Breast epithelium (tissue), 4 donors: ENCODE measurements at regions of chr18 and their contacts with region 1.

Region 1: GRCh38 chr18:48475635-48476549 is 62.9 kb upstream of the CTIF start:
- DNase-seq: no peak
- H3K4me3 ChIP-seq: no peak overlapping the region
- H3K27ac ChIP-seq: no peak overlapping the region
- H3K4me1 ChIP-seq: peaks cover 0 to 5% of the 10 kb centered on the region in 2 donors
- H3K27me3 ChIP-seq: no peaks in the 10 kb centered on the region
- CTCF ChIP-seq: peak; percentile 54 to 85 (median 77)
- POLR2A ChIP-seq: no peak

Region 2: DNA sequence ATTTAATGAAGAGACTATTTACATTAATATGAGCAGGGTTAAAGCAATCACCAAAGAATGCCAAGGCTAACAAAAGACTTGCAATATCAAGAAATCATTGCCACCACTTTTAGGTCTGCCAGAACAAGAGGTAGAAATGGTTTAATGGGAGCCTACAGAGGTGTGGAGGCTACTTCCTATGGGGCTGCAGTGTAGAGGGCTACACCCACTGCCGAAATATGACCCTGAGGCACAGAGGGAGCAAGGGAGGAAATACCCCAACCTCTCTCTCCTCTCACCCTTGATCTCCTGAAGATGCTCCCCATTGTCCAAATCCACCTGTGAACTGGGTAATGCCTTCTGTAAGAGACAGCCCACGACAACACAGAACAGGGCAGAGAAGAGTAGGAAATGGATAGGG is 860.8 kb before region 1 on chr18:
- intact Hi-C with region 1: no loop called
- DNase-seq: no peak
- H3K4me3 ChIP-seq: no peak overlapping the region
- H3K27ac ChIP-seq: no peak overlapping the region
- H3K4me1 ChIP-seq: no peaks in the 10 kb centered on the region
- H3K27me3 ChIP-seq: no peaks in the 10 kb centered on the region
- CTCF ChIP-seq: no peak
- POLR2A ChIP-seq: no peak

Region 3: GRCh38 chr18:48663931-48664847 is 188.3 kb after region 1 on chr18:
- intact Hi-C with region 1: loop called (anchors 5 kb)
- DNase-seq: peak; percentile 49 to 73
- H3K4me3 ChIP-seq: peak overlapping the region in 1 of 3 donors; percentile 28
- H3K27ac ChIP-seq: peak overlapping the region in 1 of 2 donors; percentile 19
- H3K4me1 ChIP-seq: peaks cover 0 to 7% of the 10 kb centered on the region in 2 donors
- H3K27me3 ChIP-seq: no peaks in the 10 kb centered on the region
- CTCF ChIP-seq: peak; percentile 87 to 92 (median 90)
- POLR2A ChIP-seq: no peak